ENCODE measurements at regions of chr1 and their contacts with region 1.

Region 1: DNA sequence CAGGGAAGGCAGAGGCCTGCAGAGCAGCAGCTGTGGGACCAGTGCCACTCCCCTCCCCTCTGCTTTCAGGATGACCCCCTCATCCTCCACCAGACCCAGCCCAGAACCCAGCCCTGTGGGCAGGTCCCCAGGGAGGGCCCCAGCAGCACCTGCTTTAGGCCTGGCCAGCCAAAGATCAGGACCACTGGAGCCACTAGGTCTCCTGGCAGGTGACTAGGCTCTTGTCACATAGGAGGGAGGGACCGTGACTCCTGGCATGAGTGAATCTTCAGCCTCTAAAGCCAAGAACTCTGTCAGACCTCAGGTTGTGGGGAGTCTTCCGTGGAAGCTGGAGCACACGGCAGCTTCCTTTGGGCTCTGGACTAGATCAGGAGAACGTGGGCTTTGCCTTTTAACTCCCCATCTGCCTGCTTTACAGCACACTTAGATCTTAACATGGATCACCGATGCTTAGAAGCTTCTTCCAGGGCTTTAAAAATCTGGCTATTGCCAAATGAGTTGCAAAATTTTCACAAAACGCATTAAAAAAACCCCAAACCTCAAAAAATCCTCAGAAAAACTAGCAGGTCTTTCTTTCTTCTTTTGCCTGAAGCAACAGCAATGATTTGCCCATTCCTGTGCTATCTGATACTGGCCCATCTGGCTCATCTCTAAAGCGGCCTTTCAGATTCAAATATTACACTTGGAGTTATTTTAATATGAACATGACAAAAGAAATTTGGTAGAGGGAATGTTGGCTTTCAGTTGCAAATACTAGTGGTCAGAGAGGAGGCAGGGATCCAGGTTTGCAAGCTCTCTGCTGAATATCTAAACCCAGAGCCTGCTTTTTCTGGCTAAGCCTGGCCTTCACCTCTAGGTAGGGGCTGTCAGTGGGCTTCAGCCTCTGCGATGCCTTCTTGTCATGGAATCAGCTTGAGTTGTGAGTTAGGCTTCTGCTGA is 235.2 kb downstream of the SDCCAG8 start:
- DNase-seq: peak; percentile 45
- ATAC-seq: peak; percentile 44
- H3K4me3 Mint-ChIP-seq: peak overlapping the region; percentile 54
- H3K27ac Mint-ChIP-seq: peak overlapping the region; percentile 99
- H3K4me1 Mint-ChIP-seq: peaks cover 91% of the 10 kb centered on the region
- H3K27me3 Mint-ChIP-seq: no peaks in the 10 kb centered on the region
- CTCF ChIP-seq: no peak

Region 2: DNA sequence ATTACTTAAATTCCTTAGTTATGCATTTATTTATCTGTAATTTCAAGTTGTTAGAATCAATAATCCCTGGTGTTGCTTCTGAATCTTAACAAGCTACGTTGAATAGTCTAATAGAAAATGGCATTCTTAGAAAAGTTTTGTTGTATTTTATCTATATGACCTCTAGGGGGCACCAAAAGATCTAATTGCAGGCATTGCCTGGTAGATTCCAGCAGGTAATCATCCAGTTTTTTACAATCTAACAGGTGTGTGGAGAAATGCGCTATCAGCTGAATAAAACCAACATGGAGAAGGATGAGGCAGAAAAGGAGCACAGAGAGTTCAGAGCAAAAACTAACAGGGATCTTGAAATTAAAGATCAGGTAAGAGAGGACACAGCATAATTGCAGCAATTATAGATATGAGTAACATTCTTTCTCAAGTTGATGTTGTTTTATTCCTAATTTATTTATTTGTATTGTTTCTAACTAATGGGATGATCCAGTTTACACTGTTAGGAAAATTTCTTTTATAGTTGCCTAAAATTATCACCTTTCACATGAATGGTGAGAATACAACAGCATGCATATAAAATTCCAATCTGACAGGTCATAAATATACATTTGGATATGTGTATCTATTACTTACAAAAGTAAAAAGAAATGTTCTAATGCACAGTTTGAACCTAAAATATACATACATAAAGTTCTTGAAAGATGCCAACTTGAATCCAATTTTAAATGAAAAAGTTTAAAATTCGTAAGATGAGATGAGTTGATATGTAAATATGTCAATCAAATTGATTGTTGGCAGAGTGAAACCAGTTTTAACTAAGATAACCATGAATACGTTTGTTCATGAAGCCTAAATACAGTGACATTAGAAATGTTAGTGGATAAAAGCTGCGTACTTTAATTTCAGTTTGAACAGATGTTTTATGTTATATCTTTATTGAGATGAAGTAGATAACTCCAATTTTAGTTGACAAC is 146.8 kb before region 1 on chr1:
- CTCF ChIA-PET with region 1: interaction called, 10 read pairs
- POLR2A ChIA-PET with region 1: no interaction called
- DNase-seq: no peak
- ATAC-seq: peak; percentile 44; the same call in 1 of the 2 replicates
- H3K4me3 Mint-ChIP-seq: no peak overlapping the region
- H3K27ac Mint-ChIP-seq: no peak overlapping the region
- H3K4me1 Mint-ChIP-seq: peaks cover 5% of the 10 kb centered on the region
- H3K27me3 Mint-ChIP-seq: no peaks in the 10 kb centered on the region
- CTCF ChIP-seq: peak; percentile 69

Region 3: DNA sequence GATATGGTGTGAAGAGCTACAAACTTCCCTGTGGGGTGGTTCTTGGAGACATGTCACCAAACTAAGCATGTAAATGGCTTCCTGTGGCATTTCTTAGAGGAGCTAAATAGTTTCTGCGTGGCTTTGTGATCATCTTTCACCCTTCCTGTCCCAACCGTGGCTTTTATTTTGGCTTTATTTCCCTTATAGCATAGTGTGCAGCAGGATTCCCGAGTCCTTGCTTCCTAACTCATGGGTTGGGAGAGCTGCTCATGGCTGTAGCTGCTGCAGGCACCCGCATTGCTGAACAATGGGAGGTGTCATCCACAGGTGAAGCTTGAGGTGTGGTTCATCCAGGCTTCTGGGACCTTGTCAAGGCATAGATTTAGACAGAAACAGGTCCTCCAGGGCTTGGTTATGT is 43.2 kb before region 1 on chr1:
- CTCF ChIA-PET with region 1: interaction called, 10 read pairs
- POLR2A ChIA-PET with region 1: no interaction called
- DNase-seq: no peak
- ATAC-seq: no peak
- H3K4me3 Mint-ChIP-seq: no peak overlapping the region
- H3K27ac Mint-ChIP-seq: no peak overlapping the region
- H3K4me1 Mint-ChIP-seq: 0 out of 2 replicates have a peak, but pooled peaks cover 5% of the 10 kb centered on the region
- H3K27me3 Mint-ChIP-seq: no peaks in the 10 kb centered on the region
- CTCF ChIP-seq: no peak

Region 4: DNA sequence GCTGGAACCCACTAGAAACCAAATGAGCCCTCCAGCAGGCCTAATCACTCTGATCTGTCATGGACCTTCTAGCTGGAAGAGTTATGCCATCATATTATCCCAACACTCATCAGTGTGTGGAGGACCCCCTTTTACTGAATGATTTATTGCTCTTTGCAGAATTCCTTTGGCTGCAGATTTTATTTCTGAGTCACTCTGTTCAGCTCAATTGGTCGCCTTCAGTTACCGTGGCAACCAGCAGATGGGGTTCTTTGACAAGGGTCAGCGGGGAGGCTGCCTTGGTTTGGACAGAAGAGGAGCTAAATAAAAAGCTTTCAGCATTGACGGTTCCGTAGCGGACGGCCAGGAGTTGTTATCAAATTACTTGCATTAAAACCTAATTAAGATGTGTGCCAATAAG is 15.1 kb before region 1 on chr1:
- CTCF ChIA-PET with region 1: interaction called, 20 read pairs
- POLR2A ChIA-PET with region 1: no interaction called
- DNase-seq: peak; percentile 75
- ATAC-seq: peak; percentile 54
- H3K4me3 Mint-ChIP-seq: no peak overlapping the region
- H3K27ac Mint-ChIP-seq: no peak overlapping the region
- H3K4me1 Mint-ChIP-seq: peaks cover 55% of the 10 kb centered on the region
- H3K27me3 Mint-ChIP-seq: no peaks in the 10 kb centered on the region
- CTCF ChIP-seq: peak; percentile 25; the same call in 1 of the 2 replicates